Naive thymus-derived CD4-positive, alpha-beta T cell (primary cell): ENCODE measurements at regions of chr17 and their contacts with region 1.

Region 1: DNA sequence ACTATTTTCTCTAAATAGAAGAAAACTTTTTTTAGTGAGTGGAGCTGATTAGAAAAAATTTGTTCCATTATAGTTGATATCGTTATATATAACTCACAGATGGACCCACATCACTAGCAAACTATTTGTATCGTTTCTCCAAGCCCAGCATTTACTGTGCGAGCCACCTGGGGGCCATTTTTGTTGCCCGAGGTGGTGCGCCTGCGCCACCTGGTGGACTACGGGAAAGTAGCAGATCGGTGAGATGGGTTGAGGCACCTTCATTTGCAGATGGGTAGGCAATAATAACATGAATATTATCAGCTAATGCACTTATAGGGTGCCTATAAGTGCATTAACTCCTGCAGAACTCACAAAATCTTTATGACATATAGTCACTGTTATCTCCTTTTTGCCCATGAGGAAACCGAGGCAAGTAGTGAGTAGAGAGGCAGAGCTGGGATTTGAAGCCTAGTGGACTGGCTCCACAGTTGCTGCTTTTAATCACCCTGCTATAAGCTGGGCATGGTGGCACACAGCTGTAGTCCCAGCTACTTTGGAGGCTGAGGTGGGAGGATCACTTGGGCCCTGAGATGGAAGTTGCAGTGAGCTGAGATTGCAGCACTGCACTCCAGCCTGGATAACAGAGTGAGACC is 23.2 kb upstream of the NTN1 start:
- DNase-seq: peak; percentile 65 to 86 (median 76)
- ATAC-seq: peak; percentile 88
- H3K4me3 ChIP-seq: no peak overlapping the region
- H3K4me3 Mint-ChIP-seq: no peak overlapping the region
- H3K27ac ChIP-seq: no peak overlapping the region
- H3K27ac Mint-ChIP-seq: peak overlapping the region in 1 of 9 donors; percentile 52
- H3K4me1 ChIP-seq: peaks cover 0 to 6% of the 10 kb centered on the region in 2 donors
- H3K4me1 Mint-ChIP-seq: peaks cover 0 to 15% (median 8%) of the 10 kb centered on the region in 7 donors
- H3K27me3 ChIP-seq: peaks cover 0 to 5% of the 10 kb centered on the region in 2 donors
- H3K27me3 Mint-ChIP-seq: peaks cover 23 to 43% (median 30%) of the 10 kb centered on the region in 5 donors

Region 2: GRCh38 chr17:8572764-8573163 is 425.3 kb before region 1 on chr17:
- CTCF ChIA-PET with region 1: interaction called, 3 read pairs
- POLR2A ChIA-PET with region 1: no interaction called
- intact Hi-C with region 1: loop called in 1 of 2 experiments (anchors 2 kb)
- DNase-seq: peak in 2 of 9 donors; percentile 1 to 2
- ATAC-seq: no peak
- H3K4me3 ChIP-seq: no peak overlapping the region
- H3K4me3 Mint-ChIP-seq: no peak overlapping the region
- H3K27ac ChIP-seq: no peak overlapping the region
- H3K27ac Mint-ChIP-seq: no peak overlapping the region
- H3K4me1 ChIP-seq: no peaks in the 10 kb centered on the region
- H3K4me1 Mint-ChIP-seq: no peaks in the 10 kb centered on the region
- H3K27me3 ChIP-seq: no peaks in the 10 kb centered on the region
- H3K27me3 Mint-ChIP-seq: peaks cover 0 to 12% (median 0%) of the 10 kb centered on the region in 5 donors

Region 3: GRCh38 chr17:8753976-8754440 is 244.1 kb before region 1 on chr17:
- CTCF ChIA-PET with region 1: no interaction called
- POLR2A ChIA-PET with region 1: no interaction called
- intact Hi-C with region 1: loop called in 1 of 2 experiments (anchors 1 kb)
- DNase-seq: no peak
- ATAC-seq: no peak
- H3K4me3 ChIP-seq: no peak overlapping the region
- H3K4me3 Mint-ChIP-seq: no peak overlapping the region
- H3K27ac ChIP-seq: no peak overlapping the region
- H3K27ac Mint-ChIP-seq: peak overlapping the region in 1 of 9 donors; percentile 26
- H3K4me1 ChIP-seq: no peaks in the 10 kb centered on the region
- H3K4me1 Mint-ChIP-seq: no peaks in the 10 kb centered on the region
- H3K27me3 ChIP-seq: no peaks in the 10 kb centered on the region
- H3K27me3 Mint-ChIP-seq: peaks cover 7 to 23% (median 10%) of the 10 kb centered on the region in 5 donors

Region 4: GRCh38 chr17:8894673-8895578 is 103.2 kb before region 1 on chr17:
- CTCF ChIA-PET with region 1: interaction called, 11 read pairs
- POLR2A ChIA-PET with region 1: interaction called, 3 read pairs
- intact Hi-C with region 1: loop called in 1 of 2 experiments (anchors 1 kb)
- DNase-seq: peak in 6 of 9 donors; percentile 31 to 55 (median 47)
- ATAC-seq: peak; percentile 33
- H3K4me3 ChIP-seq: no peak overlapping the region
- H3K4me3 Mint-ChIP-seq: peak overlapping the region in 6 of 10 donors; percentile 1 to 69 (median 42)
- H3K27ac ChIP-seq: peak overlapping the region; percentile 12
- H3K27ac Mint-ChIP-seq: peak overlapping the region; percentile 16 to 96 (median 70)
- H3K4me1 ChIP-seq: peaks cover 50% of the 10 kb centered on the region in 2 donors
- H3K4me1 Mint-ChIP-seq: peaks cover 44 to 71% (median 62%) of the 10 kb centered on the region in 7 donors
- H3K27me3 ChIP-seq: no peaks in the 10 kb centered on the region
- H3K27me3 Mint-ChIP-seq: no peaks in the 10 kb centered on the region

Region 5: GRCh38 chr17:9021992-9022572 is 24.0 kb after region 1 on chr17:
- CTCF ChIA-PET with region 1: no interaction called
- POLR2A ChIA-PET with region 1: no interaction called
- intact Hi-C with region 1: loop called in 1 of 2 experiments (anchors 1 kb)
- DNase-seq: peak in 3 of 9 donors; percentile 4 to 44 (median 8)
- ATAC-seq: no peak
- H3K4me3 ChIP-seq: peak overlapping the region; percentile 36
- H3K4me3 Mint-ChIP-seq: peak overlapping the region; percentile 85 to 99 (median 90)
- H3K27ac ChIP-seq: no peak overlapping the region
- H3K27ac Mint-ChIP-seq: no peak overlapping the region
- H3K4me1 ChIP-seq: peaks cover 6 to 16% of the 10 kb centered on the region in 2 donors
- H3K4me1 Mint-ChIP-seq: peaks cover 4 to 28% (median 11%) of the 10 kb centered on the region in 7 donors
- H3K27me3 ChIP-seq: peaks cover 14 to 15% of the 10 kb centered on the region in 2 donors
- H3K27me3 Mint-ChIP-seq: peaks cover 46 to 59% (median 55%) of the 10 kb centered on the region in 5 donors

Region 6: DNA sequence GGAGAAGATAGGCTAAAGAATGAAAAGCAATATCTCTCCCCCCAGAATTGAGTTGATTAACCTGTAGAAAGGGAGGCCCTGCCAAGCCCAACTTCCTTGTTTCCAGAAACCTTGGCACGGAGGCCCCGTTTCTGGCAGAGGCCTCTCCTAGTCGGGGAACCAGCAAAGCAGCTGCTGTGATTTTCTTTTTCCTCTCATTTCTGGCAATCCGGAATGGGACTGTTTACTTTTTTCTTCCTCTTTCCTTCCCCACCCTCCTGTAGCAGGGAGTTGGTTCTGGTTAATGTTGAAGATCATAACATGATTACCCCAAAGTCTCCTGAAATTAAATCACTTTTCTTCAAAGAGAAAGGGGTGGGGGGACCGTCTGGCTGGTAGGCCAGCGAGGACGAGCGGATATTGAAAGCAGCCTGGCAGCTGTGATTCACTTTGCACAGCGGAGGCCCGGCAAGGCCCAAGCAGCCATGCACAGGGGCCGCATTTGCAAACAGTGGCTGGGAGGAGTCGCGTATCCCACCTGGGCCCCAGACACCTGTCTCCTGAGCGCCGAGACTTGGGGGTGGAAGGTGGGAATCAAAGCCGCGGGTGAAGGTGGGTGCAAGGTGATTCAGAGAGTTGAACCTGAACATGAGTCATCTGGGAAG is 74.7 kb after region 1 on chr17:
- CTCF ChIA-PET with region 1: no interaction called
- POLR2A ChIA-PET with region 1: no interaction called
- intact Hi-C with region 1: no loop called
- DNase-seq: no peak
- ATAC-seq: no peak
- H3K4me3 ChIP-seq: no peak overlapping the region
- H3K4me3 Mint-ChIP-seq: no peak overlapping the region
- H3K27ac ChIP-seq: no peak overlapping the region
- H3K27ac Mint-ChIP-seq: peak overlapping the region in 1 of 9 donors; percentile 14
- H3K4me1 ChIP-seq: no peaks in the 10 kb centered on the region
- H3K4me1 Mint-ChIP-seq: peaks cover 0 to 9% (median 5%) of the 10 kb centered on the region in 7 donors
- H3K27me3 ChIP-seq: no peaks in the 10 kb centered on the region
- H3K27me3 Mint-ChIP-seq: peaks cover 0 to 10% (median 0%) of the 10 kb centered on the region in 5 donors

Region 7: GRCh38 chr17:9266031-9266680 is 268.0 kb after region 1 on chr17:
- CTCF ChIA-PET with region 1: no interaction called
- POLR2A ChIA-PET with region 1: no interaction called
- intact Hi-C with region 1: no loop called
- DNase-seq: no peak
- ATAC-seq: no peak
- H3K4me3 ChIP-seq: no peak overlapping the region
- H3K4me3 Mint-ChIP-seq: no peak overlapping the region
- H3K27ac ChIP-seq: no peak overlapping the region
- H3K27ac Mint-ChIP-seq: no peak overlapping the region
- H3K4me1 ChIP-seq: no peaks in the 10 kb centered on the region
- H3K4me1 Mint-ChIP-seq: peaks cover 0 to 9% (median 5%) of the 10 kb centered on the region in 7 donors
- H3K27me3 ChIP-seq: no peaks in the 10 kb centered on the region
- H3K27me3 Mint-ChIP-seq: no peaks in the 10 kb centered on the region